AG04449 (cell line): ENCODE measurements at regions of chr1 and their contacts with region 1.

Region 1: DNA sequence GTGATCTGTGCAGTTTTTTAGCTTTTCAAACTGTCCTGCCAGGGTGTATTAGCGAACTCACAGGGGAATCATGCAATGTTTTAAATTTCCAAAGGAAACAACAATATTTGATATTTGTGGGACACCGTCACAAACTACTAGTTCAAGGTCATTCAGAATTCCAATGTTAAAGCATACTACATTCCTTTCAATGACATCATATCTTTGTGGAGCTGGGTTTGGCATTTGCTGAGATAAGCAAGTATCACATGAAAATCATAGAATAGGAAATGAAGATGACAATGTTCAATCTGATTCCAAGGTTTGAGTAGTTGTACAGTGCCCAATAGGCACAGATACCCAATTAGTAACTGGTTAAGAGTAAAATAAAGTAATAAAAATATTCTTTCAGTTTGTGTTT is 35.6 kb downstream of the NUF2 start:
- DNase-seq: no peak
- H3K4me3 ChIP-seq: no peak overlapping the region
- CTCF ChIP-seq: no peak

Region 2: DNA sequence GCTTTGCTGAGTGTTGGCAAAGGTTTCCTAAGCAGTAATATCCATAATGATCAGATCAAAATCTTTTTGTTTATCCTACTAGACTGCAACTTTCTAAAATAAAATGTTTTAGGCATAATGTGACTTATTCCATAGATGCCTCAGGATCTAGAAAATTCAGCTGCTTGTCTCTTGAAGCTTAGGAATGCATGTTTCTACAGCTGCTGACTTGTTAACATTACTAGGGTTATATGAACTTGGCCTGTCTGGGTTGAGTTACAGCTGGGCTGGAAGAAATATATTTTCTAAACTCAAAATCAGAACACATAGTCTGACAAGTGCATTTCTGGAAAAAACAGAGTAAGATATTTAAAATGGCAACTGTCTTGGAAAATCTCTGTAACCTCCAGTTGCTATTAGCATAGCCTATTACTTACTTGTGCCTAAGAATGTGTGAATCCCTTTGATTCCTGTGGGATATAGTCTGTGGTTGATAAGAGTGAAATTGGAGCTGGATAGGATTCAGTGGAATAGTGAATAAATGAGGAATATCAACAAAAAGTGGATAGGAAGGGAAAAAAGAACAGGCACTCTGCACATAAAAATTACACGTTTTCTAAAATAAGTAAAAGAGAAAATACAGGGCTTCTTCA is 227.0 kb before region 1 on chr1:
- CTCF ChIA-PET with region 1: no interaction called
- POLR2A ChIA-PET with region 1: no interaction called
- DNase-seq: no peak
- H3K4me3 ChIP-seq: no peak overlapping the region
- CTCF ChIP-seq: no peak

Region 3: GRCh38 chr1:163367721-163368120 is 10.3 kb after region 1 on chr1:
- CTCF ChIA-PET with region 1: interaction called, 10 read pairs
- POLR2A ChIA-PET with region 1: no interaction called
- DNase-seq: no peak
- H3K4me3 ChIP-seq: no peak overlapping the region
- CTCF ChIP-seq: no peak

Region 4: DNA sequence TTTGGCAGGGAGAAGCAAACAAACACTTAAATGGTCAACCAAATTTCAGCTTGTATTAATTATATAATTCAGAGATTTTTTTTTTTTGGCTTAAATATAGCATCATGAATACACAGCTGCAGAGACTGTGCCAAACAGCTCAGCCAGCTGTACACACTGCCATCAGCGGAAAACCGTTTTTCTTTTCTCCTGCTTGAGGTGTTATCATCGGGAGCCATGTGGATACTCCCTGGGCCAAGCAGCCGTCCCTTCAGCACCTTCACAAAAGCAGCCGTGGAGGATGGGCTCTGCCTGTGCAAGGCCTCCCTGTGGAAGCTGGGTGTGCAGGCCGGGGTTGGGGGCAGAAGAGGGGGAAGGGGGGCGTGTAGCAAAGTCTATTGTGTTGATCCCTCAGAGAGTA is 49.4 kb after region 1 on chr1:
- CTCF ChIA-PET with region 1: no interaction called
- POLR2A ChIA-PET with region 1: no interaction called
- DNase-seq: no peak
- H3K4me3 ChIP-seq: no peak overlapping the region
- CTCF ChIP-seq: no peak